Activated T-helper 2 cell treated with anti-CD3 and anti-CD28 coated beads, Interferon-gamma antibody, Interleukin-2, Interleukin-4, amounts not matched to agents 10 μg/mL and 5 μg/mL and 100 μg/mL, durations not matched to agents 14 hours and 24 hours and 36 hours (primary cell): ENCODE measurements at regions of chr4 and their contacts with region 1.

Region 1: DNA sequence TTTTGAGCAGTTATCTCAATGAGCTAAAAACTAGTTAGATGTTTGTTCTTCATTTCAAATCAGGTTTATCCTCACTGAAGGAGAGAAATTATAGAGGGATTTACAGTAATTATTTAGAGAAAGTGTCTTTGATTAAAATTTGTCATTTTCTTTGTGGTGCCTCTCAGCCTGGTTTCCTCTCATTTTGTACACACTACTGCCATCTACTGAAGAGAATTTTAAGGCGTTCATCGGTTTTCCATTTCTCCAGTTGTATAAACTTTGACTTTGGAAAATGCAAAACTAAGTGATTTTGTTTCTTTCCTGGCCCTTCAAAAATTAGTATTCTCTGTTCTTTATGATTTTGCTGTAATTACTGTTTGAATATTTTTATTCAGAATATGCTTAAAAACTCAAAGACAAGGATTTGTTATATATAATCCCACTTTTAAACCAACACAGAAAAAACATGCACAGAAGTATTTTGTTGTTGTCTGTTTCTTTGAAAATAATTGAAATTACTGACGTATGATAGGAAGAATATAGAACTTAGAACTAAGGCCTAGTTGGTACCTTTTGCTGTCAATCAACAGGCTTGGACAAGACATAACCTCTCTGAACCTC is 34.4 kb upstream of the ANXA3 start:
- DNase-seq: no peak
- H3K4me3 Mint-ChIP-seq: no peak overlapping the region
- H3K27ac Mint-ChIP-seq: no peak overlapping the region
- H3K4me1 Mint-ChIP-seq: no peaks in the 10 kb centered on the region
- H3K27me3 Mint-ChIP-seq: peaks cover 11% of the 10 kb centered on the region

Region 2: GRCh38 chr4:77959566-77960338 is 557.4 kb before region 1 on chr4:
- intact Hi-C with region 1: loop called (anchors 1 kb)
- DNase-seq: no peak
- H3K4me3 Mint-ChIP-seq: no peak overlapping the region
- H3K27ac Mint-ChIP-seq: no peak overlapping the region
- H3K4me1 Mint-ChIP-seq: peaks cover 3% of the 10 kb centered on the region
- H3K27me3 Mint-ChIP-seq: peaks cover 5% of the 10 kb centered on the region

Region 3: DNA sequence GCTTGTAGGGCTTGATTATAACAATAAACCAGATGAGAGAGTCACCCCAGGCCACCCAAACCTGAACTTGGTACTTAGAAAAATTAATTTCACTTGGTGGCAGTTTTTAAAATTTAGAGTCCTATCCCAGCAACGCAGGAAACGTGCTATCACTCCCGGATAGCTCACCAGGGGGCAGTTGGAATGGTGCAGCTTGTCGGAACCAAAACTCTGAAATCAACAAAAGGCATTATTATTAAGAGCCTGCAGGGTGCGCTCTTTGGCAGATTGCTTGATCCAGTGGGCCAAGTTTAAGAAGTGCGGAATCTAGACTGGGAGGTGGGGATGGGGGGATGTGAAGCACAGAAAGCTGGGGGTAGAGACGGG is 457.6 kb before region 1 on chr4:
- intact Hi-C with region 1: loop called (anchors 2 kb)
- DNase-seq: no peak
- H3K4me3 Mint-ChIP-seq: peak overlapping the region; percentile 23
- H3K27ac Mint-ChIP-seq: no peak overlapping the region
- H3K4me1 Mint-ChIP-seq: peaks cover 26% of the 10 kb centered on the region
- H3K27me3 Mint-ChIP-seq: peaks cover 63% of the 10 kb centered on the region

Region 4: DNA sequence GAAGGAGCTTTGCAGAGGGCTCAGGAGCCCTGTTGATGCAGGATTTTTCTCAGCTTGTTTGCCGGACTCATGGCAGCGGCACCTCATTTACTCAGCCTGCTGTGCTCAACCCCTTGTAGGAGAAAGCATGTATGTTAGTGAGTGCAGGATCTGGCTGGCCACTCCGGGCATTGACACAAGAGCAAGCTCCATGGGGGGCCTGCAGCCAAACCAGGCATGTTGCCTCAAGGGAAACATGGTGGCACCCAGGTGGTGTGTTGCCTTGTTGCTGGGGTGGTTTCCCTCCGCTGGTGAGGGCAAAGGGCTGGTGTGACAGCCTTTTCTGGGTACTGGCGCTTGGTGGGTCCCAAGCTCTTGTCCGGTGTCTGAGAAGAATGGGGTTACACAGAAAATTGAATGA is 154.8 kb before region 1 on chr4:
- intact Hi-C with region 1: no loop called
- DNase-seq: no peak
- H3K4me3 Mint-ChIP-seq: no peak overlapping the region
- H3K27ac Mint-ChIP-seq: no peak overlapping the region
- H3K4me1 Mint-ChIP-seq: no peaks in the 10 kb centered on the region
- H3K27me3 Mint-ChIP-seq: peaks cover 16% of the 10 kb centered on the region